ENCODE measurements at regions of chr9 and their contacts with region 1.

Region 1: GRCh38 chr9:87336914-87337333 is 160.7 kb upstream of the DAPK1 start:
- DNase-seq: no peak
- H3K4me3 ChIP-seq: peak overlapping the region; percentile 20 to 33
- H3K27ac ChIP-seq: no peak overlapping the region
- H3K4me1 ChIP-seq: peaks cover 0 to 10% (median 9%) of the 10 kb centered on the region in 4 donors
- H3K27me3 ChIP-seq: no peaks in the 10 kb centered on the region
- CTCF ChIP-seq: peak; percentile 72 to 80

Region 2: GRCh38 chr9:87630266-87630665 is 293.3 kb after region 1 on chr9:
- intact Hi-C with region 1: no loop called
- DNase-seq: no peak
- H3K4me3 ChIP-seq: no peak overlapping the region
- H3K27ac ChIP-seq: no peak overlapping the region
- H3K4me1 ChIP-seq: no peaks in the 10 kb centered on the region
- H3K27me3 ChIP-seq: no peaks in the 10 kb centered on the region
- CTCF ChIP-seq: no peak

Region 3: GRCh38 chr9:87662808-87663528 is 326.0 kb after region 1 on chr9:
- intact Hi-C with region 1: loop called (anchors 5 kb)
- DNase-seq: peak; percentile 52 to 72
- H3K4me3 ChIP-seq: no peak overlapping the region
- H3K27ac ChIP-seq: no peak overlapping the region
- H3K4me1 ChIP-seq: no peaks in the 10 kb centered on the region
- H3K27me3 ChIP-seq: no peaks in the 10 kb centered on the region
- CTCF ChIP-seq: peak; percentile 55 to 58

Measured in tibial artery (tissue), 4 donors.